PC-3 (cell line): ENCODE measurements at regions of chr7 and their contacts with region 1.

Region 1: GRCh38 chr7:30800785-30801252 is 29.6 kb downstream of the MINDY4 start:
- DNase-seq: peak; percentile 80
- ATAC-seq: peak; percentile 34
- H3K4me3 ChIP-seq: no peak overlapping the region
- H3K27ac ChIP-seq: no peak overlapping the region
- H3K4me1 ChIP-seq: peaks cover 57% of the 10 kb centered on the region
- H3K27me3 ChIP-seq: no peaks in the 10 kb centered on the region
- CTCF ChIP-seq: peak; percentile 86

Region 2: DNA sequence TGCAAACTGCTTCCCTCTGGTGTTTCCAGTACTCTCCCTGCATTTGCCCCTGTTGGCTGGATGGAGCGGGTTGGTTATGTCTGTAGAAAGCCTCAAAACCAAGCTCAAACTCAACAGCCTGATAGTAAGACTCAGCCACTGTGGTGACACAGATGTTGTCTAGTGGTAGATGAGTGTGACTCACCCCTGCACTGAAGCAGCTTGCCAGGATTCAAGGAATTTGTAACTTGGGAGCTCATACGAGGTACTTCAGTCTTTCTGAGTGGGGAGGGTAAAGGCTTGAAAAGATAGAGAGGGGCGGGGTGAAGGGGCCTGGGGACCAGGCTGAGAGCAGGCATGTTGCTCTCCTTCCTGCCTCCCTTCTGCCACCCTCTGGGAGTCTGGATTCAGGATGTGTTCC is 87.9 kb after region 1 on chr7:
- CTCF ChIA-PET with region 1: no interaction called
- POLR2A ChIA-PET with region 1: no interaction called
- intact Hi-C with region 1: loop called (anchors 5 kb)
- DNase-seq: peak; percentile 74
- ATAC-seq: peak; percentile 96
- H3K4me3 ChIP-seq: no peak overlapping the region
- H3K27ac ChIP-seq: no peak overlapping the region
- H3K4me1 ChIP-seq: peaks cover 9% of the 10 kb centered on the region; the same call in 1 of the 2 replicates
- H3K27me3 ChIP-seq: no peaks in the 10 kb centered on the region
- CTCF ChIP-seq: no peak

Region 3: GRCh38 chr7:31122649-31123058 is 321.8 kb after region 1 on chr7:
- CTCF ChIA-PET with region 1: interaction called, 7 read pairs
- POLR2A ChIA-PET with region 1: no interaction called
- intact Hi-C with region 1: loop called (anchors 1 kb)
- DNase-seq: peak; percentile 88
- ATAC-seq: peak; percentile 84
- H3K4me3 ChIP-seq: no peak overlapping the region
- H3K27ac ChIP-seq: no peak overlapping the region
- H3K4me1 ChIP-seq: no peaks in the 10 kb centered on the region
- H3K27me3 ChIP-seq: peaks cover 16% of the 10 kb centered on the region
- CTCF ChIP-seq: peak; percentile 86